ENCODE measurements at regions of chr3 and their contacts with region 1.

Region 1: GRCh38 chr3:48656061-48656840 is 6.4 kb downstream of the CELSR3 start:
- DNase-seq: peak; percentile 73
- H3K4me3 ChIP-seq: peak overlapping the region; percentile 8 to 46 (median 18)
- H3K27ac ChIP-seq: no peak overlapping the region
- H3K4me1 ChIP-seq: peaks cover 7% of the 10 kb centered on the region
- H3K27me3 ChIP-seq: no peaks in the 10 kb centered on the region
- CTCF ChIP-seq: peak; percentile 75 to 85
- POLR2A ChIP-seq: no peak

Region 2: GRCh38 chr3:48609088-48610005 is 46.9 kb before region 1 on chr3 and contains the start of gene UQCRC1:
- CTCF ChIA-PET with region 1: no interaction called
- POLR2A ChIA-PET with region 1: no interaction called
- dilution Hi-C with region 1: no loop called
- intact Hi-C with region 1: loop called (anchors 1 kb)
- DNase-seq: peak; percentile 96
- H3K4me3 ChIP-seq: peak within 1 kb of the TSS; percentile 52 to 85 (median 73)
- H3K27ac ChIP-seq: peak within 1 kb of the TSS; percentile 9
- H3K4me1 ChIP-seq: peaks cover 13% of the 10 kb centered on the region
- H3K27me3 ChIP-seq: no peaks in the 10 kb centered on the region
- CTCF ChIP-seq: peak; percentile 52 to 84
- POLR2A ChIP-seq: peak; percentile 96
- total RNA-seq, gene UQCRC1: 184 and 186 TPM in 2 replicates